HepG2 (cell line): ENCODE measurements at regions of chr1 and their contacts with region 1.

Region 1: DNA sequence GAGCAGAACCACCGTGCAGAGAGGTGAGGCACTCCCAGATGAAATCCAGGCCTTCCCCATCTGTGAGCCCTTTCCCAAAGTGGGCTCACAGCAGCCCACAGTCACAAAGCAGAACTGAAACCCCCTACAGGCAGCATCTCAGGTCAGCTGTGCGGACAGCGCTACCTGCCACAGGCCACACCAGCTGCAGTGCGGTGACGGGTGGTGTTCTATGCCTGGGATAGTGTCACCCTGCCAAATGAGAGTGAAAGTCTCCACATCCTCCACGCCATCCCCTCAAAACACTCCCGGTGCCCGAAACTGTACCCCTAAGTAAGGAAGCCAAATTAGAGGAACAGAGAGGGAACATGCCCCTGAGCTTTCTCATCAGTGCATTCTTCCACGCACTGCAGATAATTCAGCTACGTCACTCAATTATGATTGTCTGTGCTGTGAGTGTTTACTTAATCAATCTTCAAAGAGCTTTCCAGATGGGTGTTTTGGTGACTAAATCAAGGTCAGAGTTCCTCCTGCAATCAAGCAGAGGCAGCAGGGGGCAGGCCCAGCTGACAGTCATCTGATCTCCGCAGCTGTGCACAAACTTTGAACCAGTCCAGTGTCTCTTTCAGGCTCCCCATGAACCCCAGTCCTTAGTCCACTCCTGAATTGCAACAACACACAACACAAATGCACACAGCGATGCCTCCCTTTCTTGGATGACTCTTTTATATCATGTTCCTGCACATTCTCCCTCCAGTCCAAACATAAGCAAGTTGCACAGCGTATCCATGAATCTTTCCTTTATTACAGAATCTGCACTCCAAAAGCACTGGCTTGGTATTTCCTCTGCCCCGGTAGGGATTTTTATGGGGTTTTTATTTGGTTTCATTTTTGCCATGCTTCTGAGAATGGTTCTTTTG is 150.0 kb downstream of the TOMM20 start:
- DNase-seq: peak; percentile 96
- ATAC-seq: peak; percentile 12
- H3K4me3 ChIP-seq: no peak overlapping the region
- H3K27ac ChIP-seq: peak overlapping the region; percentile 100
- H3K4me1 ChIP-seq: peaks cover 99% of the 10 kb centered on the region
- H3K27me3 ChIP-seq: no peaks in the 10 kb centered on the region; a peak in 1 of 5 replicates
- CTCF ChIP-seq: peak; percentile 62
- EP300 ChIP-seq: peak; percentile 78 to 96; a peak in 3 of 4 replicates
- POLR2A ChIP-seq: peak in 1 of 2 experiments; percentile 24; a peak in 1 of 4 replicates
- RAD21 ChIP-seq: peak; percentile 56; the same call in 1 of the 2 replicates

Region 2: DNA sequence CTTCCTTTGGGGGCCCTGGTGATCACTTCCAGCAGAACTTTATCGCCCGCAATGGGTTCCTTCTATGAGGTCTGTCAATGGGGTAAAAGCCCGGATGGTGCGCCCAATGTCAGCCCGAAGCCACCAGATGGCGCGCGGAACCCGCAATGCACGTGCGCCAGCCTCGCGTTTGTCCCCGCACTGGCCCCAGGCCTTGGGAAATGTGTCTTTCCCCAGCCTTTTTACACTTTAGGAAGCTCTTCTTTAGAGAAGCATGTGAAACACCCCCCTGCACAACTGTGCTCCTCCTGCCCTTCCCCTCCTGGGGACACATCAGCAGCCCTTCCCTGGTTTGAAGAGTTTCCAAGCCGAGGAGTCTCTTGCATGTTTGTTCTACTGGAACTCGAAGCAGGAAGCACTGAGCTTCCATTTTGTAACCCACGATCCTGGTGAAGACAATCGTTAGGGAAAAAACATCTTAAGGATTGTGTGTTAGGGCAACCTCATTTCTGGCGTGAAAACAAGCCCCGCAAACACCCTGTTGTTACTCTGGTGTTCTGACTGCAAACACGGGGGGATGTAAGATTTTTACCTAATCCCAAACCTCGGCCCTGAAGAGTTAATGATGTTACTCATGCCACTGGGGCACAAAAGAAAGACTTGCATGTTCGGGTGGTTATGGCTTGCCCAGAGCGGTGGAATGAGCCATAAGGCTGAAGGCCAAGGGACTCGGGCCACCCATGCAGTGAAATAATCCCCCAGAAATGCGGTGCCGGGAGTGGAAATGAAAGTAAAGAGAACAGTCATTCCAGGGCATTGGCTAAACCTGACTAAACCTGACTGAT is 479.3 kb before region 1 on chr1:
- CTCF ChIA-PET with region 1: no interaction called
- POLR2A ChIA-PET with region 1: interaction called, 13 read pairs
- in situ Hi-C with region 1: loop called (anchors 10 kb)
- intact Hi-C with region 1: loop called (anchors 5 kb)
- DNase-seq: peak; percentile 65
- ATAC-seq: peak; percentile 99
- H3K4me3 ChIP-seq: 0 out of 6 replicates have a peak overlapping the region, but pooled peaks of 1 of the 3 experiments have one; percentile 8
- H3K27ac ChIP-seq: peak overlapping the region; percentile 50
- H3K4me1 ChIP-seq: peaks cover 61% of the 10 kb centered on the region
- H3K27me3 ChIP-seq: no peaks in the 10 kb centered on the region
- CTCF ChIP-seq: peak; percentile 97
- EP300 ChIP-seq: no peak
- POLR2A ChIP-seq: no peak
- RAD21 ChIP-seq: peak; percentile 99

Region 3: DNA sequence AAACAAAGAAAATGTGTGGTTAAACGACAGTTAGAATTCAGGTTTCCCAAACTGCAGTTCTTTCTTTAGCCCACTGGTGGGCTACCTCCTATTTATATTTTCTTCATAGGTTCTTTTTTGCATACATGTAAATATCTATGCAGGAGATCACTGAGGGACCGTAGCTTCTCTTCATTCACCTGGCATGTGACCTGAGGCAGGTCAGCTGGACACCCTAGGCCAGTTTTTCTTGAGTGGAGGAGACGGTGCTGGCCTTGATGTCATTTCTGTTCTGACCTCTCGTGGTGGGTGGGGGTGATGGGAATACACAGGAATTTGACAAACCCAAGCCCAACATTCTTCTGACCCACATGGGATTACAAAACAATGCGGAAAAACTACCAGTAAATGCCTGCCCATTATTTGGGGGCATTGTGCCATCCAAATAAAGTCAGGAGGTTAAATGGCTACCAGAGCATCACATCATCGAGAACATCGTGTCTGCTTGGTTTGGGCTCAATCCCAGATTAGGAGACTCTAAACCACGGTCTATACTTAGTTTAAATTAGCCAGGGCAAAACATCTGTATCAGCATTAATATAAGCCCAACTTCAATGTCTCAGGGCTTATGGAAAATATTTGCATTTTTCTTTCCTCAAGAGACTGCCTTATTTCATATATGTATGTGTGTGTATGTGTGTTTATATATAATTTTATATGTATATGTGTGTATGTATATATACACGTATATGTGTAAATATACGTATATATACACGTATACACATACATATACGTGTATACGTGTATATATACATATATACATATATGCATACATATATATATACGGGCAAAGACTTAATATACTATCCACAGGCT is 361.3 kb before region 1 on chr1:
- CTCF ChIA-PET with region 1: no interaction called
- POLR2A ChIA-PET with region 1: interaction called, 174 read pairs
- in situ Hi-C with region 1: no loop called
- intact Hi-C with region 1: loop called (anchors 2 kb)
- DNase-seq: no peak
- ATAC-seq: no peak
- H3K4me3 ChIP-seq: no peak overlapping the region
- H3K27ac ChIP-seq: peak overlapping the region; percentile 99
- H3K4me1 ChIP-seq: peaks cover 97% of the 10 kb centered on the region
- H3K27me3 ChIP-seq: no peaks in the 10 kb centered on the region
- CTCF ChIP-seq: no peak
- EP300 ChIP-seq: no peak
- POLR2A ChIP-seq: no peak
- RAD21 ChIP-seq: no peak

Region 4: GRCh38 chr1:234875953-234876855 is 102.4 kb before region 1 on chr1:
- CTCF ChIA-PET with region 1: no interaction called
- POLR2A ChIA-PET with region 1: interaction called, 139 read pairs
- in situ Hi-C with region 1: no loop called
- intact Hi-C with region 1: loop called (anchors 1 kb)
- DNase-seq: peak; percentile 98
- ATAC-seq: peak; percentile 74
- H3K4me3 ChIP-seq: peak overlapping the region; percentile 36 to 71 (median 49); a peak in 5 of 6 replicates
- H3K27ac ChIP-seq: peak overlapping the region; percentile 98
- H3K4me1 ChIP-seq: peaks cover 93% of the 10 kb centered on the region
- H3K27me3 ChIP-seq: no peaks in the 10 kb centered on the region; a peak in 1 of 5 replicates
- CTCF ChIP-seq: no peak; the same call in 1 of the 2 replicates
- EP300 ChIP-seq: peak; percentile 74 to 97; a peak in 3 of 4 replicates
- POLR2A ChIP-seq: peak; percentile 43 to 62; a peak in 2 of 4 replicates
- RAD21 ChIP-seq: peak; percentile 20; the same call in 1 of the 2 replicates

Region 5: DNA sequence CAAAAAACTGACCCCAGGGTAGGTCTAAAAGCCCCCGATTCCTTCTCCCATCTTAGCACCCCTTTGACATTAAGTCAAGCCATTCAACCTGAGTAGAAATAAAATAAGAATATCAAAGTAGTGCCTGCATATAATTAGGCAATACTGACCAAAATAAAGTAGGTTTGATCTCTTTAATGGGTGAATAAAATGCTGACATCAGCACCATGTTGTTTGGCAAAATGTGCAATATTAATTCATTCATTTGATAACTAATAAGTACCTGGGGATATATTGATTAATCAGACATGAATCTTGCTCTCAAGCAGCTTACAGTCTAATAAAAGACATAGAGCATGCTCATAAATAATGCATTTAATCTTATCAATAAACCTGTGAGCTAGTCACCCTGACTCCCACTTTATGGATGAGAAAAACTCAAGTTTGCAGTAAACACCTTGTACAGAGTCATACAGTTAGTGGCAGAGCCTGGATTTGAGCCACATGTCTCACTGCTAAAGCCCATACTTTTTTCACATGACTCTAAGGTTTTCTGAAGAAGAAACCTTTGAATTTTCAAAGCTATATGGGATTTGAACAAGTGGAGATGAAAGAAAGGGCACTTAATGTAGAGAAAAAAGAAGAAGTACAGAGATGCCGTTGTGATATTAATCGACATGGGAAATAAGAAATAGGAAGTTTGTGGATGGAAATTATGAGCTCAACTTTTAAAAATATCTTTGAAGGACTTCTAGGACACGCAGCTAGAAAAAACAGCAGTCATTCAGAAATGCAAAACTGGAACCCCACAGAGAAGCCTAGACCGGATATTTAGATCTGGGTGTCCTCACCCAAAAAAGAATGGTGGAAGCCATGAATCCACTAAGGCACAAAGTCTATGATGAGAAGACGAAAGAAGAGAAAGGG is 34.0 kb before region 1 on chr1:
- CTCF ChIA-PET with region 1: no interaction called
- POLR2A ChIA-PET with region 1: no interaction called
- in situ Hi-C with region 1: no loop called
- intact Hi-C with region 1: no loop called
- DNase-seq: no peak
- ATAC-seq: no peak
- H3K4me3 ChIP-seq: no peak overlapping the region
- H3K27ac ChIP-seq: no peak overlapping the region
- H3K4me1 ChIP-seq: peaks cover 11% of the 10 kb centered on the region
- H3K27me3 ChIP-seq: no peaks in the 10 kb centered on the region
- CTCF ChIP-seq: no peak
- EP300 ChIP-seq: no peak
- POLR2A ChIP-seq: no peak
- RAD21 ChIP-seq: no peak

Region 6: GRCh38 chr1:234963180-234963903 is 15.3 kb before region 1 on chr1:
- CTCF ChIA-PET with region 1: no interaction called
- POLR2A ChIA-PET with region 1: interaction called, 657 read pairs
- in situ Hi-C with region 1: no loop called
- intact Hi-C with region 1: loop called (anchors 1 kb)
- DNase-seq: peak; percentile 99
- ATAC-seq: peak; percentile 70
- H3K4me3 ChIP-seq: peak overlapping the region in 2 of 3 experiments; percentile 33 to 55; a peak in 2 of 6 replicates
- H3K27ac ChIP-seq: peak overlapping the region; percentile 100
- H3K4me1 ChIP-seq: peaks cover 78% of the 10 kb centered on the region
- H3K27me3 ChIP-seq: no peaks in the 10 kb centered on the region
- CTCF ChIP-seq: no peak
- EP300 ChIP-seq: peak in 1 of 2 experiments; percentile 98; a peak in 2 of 4 replicates
- POLR2A ChIP-seq: peak; percentile 70 to 80
- RAD21 ChIP-seq: peak; percentile 26; the same call in 1 of the 2 replicates

Region 7: GRCh38 chr1:235060607-235061470 is 82.2 kb after region 1 on chr1:
- CTCF ChIA-PET with region 1: no interaction called
- POLR2A ChIA-PET with region 1: interaction called, 28 read pairs
- in situ Hi-C with region 1: no loop called
- intact Hi-C with region 1: no loop called
- DNase-seq: peak; percentile 81
- ATAC-seq: peak; percentile 31
- H3K4me3 ChIP-seq: no peak overlapping the region
- H3K27ac ChIP-seq: peak overlapping the region; percentile 82
- H3K4me1 ChIP-seq: peaks cover 64% of the 10 kb centered on the region
- H3K27me3 ChIP-seq: no peaks in the 10 kb centered on the region
- CTCF ChIP-seq: no peak
- EP300 ChIP-seq: no peak
- POLR2A ChIP-seq: peak in 1 of 2 experiments; percentile 50; a peak in 2 of 4 replicates
- RAD21 ChIP-seq: no peak

Region 8: GRCh38 chr1:235128456-235129328 is 150.0 kb after region 1 on chr1 and contains the start of gene TOMM20:
- CTCF ChIA-PET with region 1: no interaction called
- POLR2A ChIA-PET with region 1: interaction called, 10 read pairs
- in situ Hi-C with region 1: no loop called
- intact Hi-C with region 1: no loop called
- DNase-seq: peak; percentile 97
- ATAC-seq: peak; percentile 92
- H3K4me3 ChIP-seq: peak within 1 kb of the TSS; percentile 82 to 94 (median 89)
- H3K27ac ChIP-seq: peak within 1 kb of the TSS; percentile 94
- H3K4me1 ChIP-seq: peaks cover 55% of the 10 kb centered on the region
- H3K27me3 ChIP-seq: no peaks in the 10 kb centered on the region; a peak in 1 of 5 replicates
- CTCF ChIP-seq: no peak
- EP300 ChIP-seq: peak in 1 of 2 experiments; percentile 5; a peak in 1 of 4 replicates
- POLR2A ChIP-seq: peak; percentile 93 to 96
- RAD21 ChIP-seq: 0 out of 2 replicates have a peak, but pooled peaks have one; percentile 11
- total RNA-seq, gene TOMM20: 138 and 153 TPM in 2 replicates

Region 9: GRCh38 chr1:235910357-235911299 is 932.0 kb after region 1 on chr1:
- CTCF ChIA-PET with region 1: no interaction called
- POLR2A ChIA-PET with region 1: no interaction called
- in situ Hi-C with region 1: no loop called
- intact Hi-C with region 1: no loop called
- DNase-seq: peak; percentile 28
- ATAC-seq: peak; percentile 50
- H3K4me3 ChIP-seq: no peak overlapping the region
- H3K27ac ChIP-seq: no peak overlapping the region
- H3K4me1 ChIP-seq: no peaks in the 10 kb centered on the region
- H3K27me3 ChIP-seq: no peaks in the 10 kb centered on the region
- CTCF ChIP-seq: no peak
- EP300 ChIP-seq: no peak
- POLR2A ChIP-seq: no peak
- RAD21 ChIP-seq: no peak